ENCODE measurements at regions of chr5 and their contacts with region 1.

Region 1: GRCh38 chr5:33726422-33727165 is 165.2 kb downstream of the ADAMTS12 start:
- DNase-seq: no peak
- H3K4me3 ChIP-seq: no peak overlapping the region
- CTCF ChIP-seq: no peak

Region 2: GRCh38 chr5:33679791-33680190 is 46.8 kb before region 1 on chr5:
- in situ Hi-C with region 1: no loop called
- DNase-seq: no peak
- H3K4me3 ChIP-seq: no peak overlapping the region
- CTCF ChIP-seq: no peak

Region 3: GRCh38 chr5:33690374-33691135 is 36.0 kb before region 1 on chr5:
- in situ Hi-C with region 1: loop called (anchors 5 kb)
- DNase-seq: peak; percentile 87
- H3K4me3 ChIP-seq: no peak overlapping the region
- CTCF ChIP-seq: no peak